ENCODE measurements at regions of chr13 and their contacts with region 1.

Region 1: DNA sequence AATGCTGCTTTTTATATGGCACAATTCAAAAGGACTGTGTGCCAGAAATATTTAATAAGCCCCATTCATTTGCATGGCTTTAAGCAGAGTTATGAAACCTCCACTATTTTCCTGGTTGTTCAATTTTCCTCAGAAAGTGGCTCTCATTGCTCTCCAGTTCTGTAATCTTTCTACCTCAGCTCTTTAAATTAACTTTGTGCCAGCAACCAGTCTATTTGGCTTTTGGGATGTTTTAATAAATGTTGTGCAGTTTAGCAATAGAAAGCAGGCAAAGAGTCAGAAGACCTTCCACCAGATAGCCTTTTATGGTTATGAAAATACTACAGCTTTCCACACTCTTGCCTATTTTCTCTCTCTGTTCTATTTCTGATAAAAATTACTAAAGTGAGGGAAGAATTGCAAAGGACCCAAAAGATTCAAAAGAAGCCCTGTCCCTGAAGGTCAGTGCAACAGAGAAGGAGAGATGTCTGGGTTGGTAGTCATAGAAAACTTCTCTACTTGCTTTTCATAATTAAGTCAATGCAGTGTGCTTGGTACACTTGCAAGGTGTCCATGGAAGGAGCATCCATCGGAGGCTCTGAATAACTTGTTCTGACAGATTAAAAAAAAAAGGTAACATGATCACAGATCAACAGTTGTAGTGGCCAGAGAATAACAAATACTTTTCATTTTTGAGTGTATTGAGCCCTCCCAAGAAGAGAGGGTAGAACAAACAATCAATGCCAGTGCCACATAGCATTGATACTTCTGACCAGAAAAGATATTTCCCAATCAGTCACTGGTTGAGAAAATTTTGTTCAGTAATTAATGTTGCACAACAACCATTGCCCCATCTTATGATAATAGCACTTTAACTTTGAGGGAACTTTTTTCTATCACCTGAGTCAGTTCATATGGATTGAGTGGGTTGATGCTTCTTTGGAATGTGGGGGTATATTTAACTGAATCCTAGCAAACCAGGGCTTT is 48.4 kb upstream of the SPRY2 start:
- DNase-seq: no peak
- H3K4me3 ChIP-seq: no peak overlapping the region
- H3K4me3 Mint-ChIP-seq: no peak overlapping the region
- H3K27ac ChIP-seq: no peak overlapping the region
- H3K27ac Mint-ChIP-seq: no peak overlapping the region
- H3K4me1 ChIP-seq: no peaks in the 10 kb centered on the region
- H3K4me1 Mint-ChIP-seq: peaks cover 14 to 20% (median 20%) of the 10 kb centered on the region in 3 donors
- H3K27me3 ChIP-seq: no peaks in the 10 kb centered on the region
- H3K27me3 Mint-ChIP-seq: peaks cover 0 to 2% of the 10 kb centered on the region in 2 donors

Region 2: GRCh38 chr13:80419416-80419815 is 30.1 kb after region 1 on chr13:
- CTCF ChIA-PET with region 1: no interaction called
- POLR2A ChIA-PET with region 1: interaction called, 10 read pairs
- DNase-seq: no peak
- H3K4me3 ChIP-seq: no peak overlapping the region
- H3K4me3 Mint-ChIP-seq: peak overlapping the region in 2 of 7 donors; percentile 10 to 24
- H3K27ac ChIP-seq: no peak overlapping the region
- H3K27ac Mint-ChIP-seq: no peak overlapping the region
- H3K4me1 ChIP-seq: no peaks in the 10 kb centered on the region
- H3K4me1 Mint-ChIP-seq: peaks cover 5 to 9% (median 6%) of the 10 kb centered on the region in 3 donors
- H3K27me3 ChIP-seq: no peaks in the 10 kb centered on the region
- H3K27me3 Mint-ChIP-seq: no peaks in the 10 kb centered on the region

Region 3: GRCh38 chr13:80496721-80497397 is 107.5 kb after region 1 on chr13:
- CTCF ChIA-PET with region 1: no interaction called
- POLR2A ChIA-PET with region 1: no interaction called
- DNase-seq: no peak
- H3K4me3 ChIP-seq: no peak overlapping the region
- H3K4me3 Mint-ChIP-seq: no peak overlapping the region
- H3K27ac ChIP-seq: no peak overlapping the region
- H3K27ac Mint-ChIP-seq: no peak overlapping the region
- H3K4me1 ChIP-seq: no peaks in the 10 kb centered on the region
- H3K4me1 Mint-ChIP-seq: no peaks in the 10 kb centered on the region
- H3K27me3 ChIP-seq: no peaks in the 10 kb centered on the region
- H3K27me3 Mint-ChIP-seq: no peaks in the 10 kb centered on the region

Region 4: GRCh38 chr13:80524447-80525215 is 135.3 kb after region 1 on chr13:
- CTCF ChIA-PET with region 1: no interaction called
- POLR2A ChIA-PET with region 1: no interaction called
- DNase-seq: no peak
- H3K4me3 ChIP-seq: no peak overlapping the region
- H3K4me3 Mint-ChIP-seq: no peak overlapping the region
- H3K27ac ChIP-seq: no peak overlapping the region
- H3K27ac Mint-ChIP-seq: peak overlapping the region in 1 of 8 donors; percentile 48
- H3K4me1 ChIP-seq: no peaks in the 10 kb centered on the region
- H3K4me1 Mint-ChIP-seq: no peaks in the 10 kb centered on the region
- H3K27me3 ChIP-seq: no peaks in the 10 kb centered on the region
- H3K27me3 Mint-ChIP-seq: peaks cover 0 to 1% of the 10 kb centered on the region in 2 donors

Region 5: GRCh38 chr13:80814541-80814940 is 425.2 kb after region 1 on chr13:
- CTCF ChIA-PET with region 1: no interaction called
- POLR2A ChIA-PET with region 1: no interaction called
- DNase-seq: no peak
- H3K4me3 ChIP-seq: no peak overlapping the region
- H3K4me3 Mint-ChIP-seq: no peak overlapping the region
- H3K27ac ChIP-seq: no peak overlapping the region
- H3K27ac Mint-ChIP-seq: no peak overlapping the region
- H3K4me1 ChIP-seq: no peaks in the 10 kb centered on the region
- H3K4me1 Mint-ChIP-seq: no peaks in the 10 kb centered on the region
- H3K27me3 ChIP-seq: no peaks in the 10 kb centered on the region
- H3K27me3 Mint-ChIP-seq: no peaks in the 10 kb centered on the region

Measured in CD8-positive, alpha-beta memory T cell (primary cell).